ENCODE measurements at regions of chr7 and their contacts with region 1.

Region 1: GRCh38 chr7:25968205-25968993 is 183.6 kb upstream of the NFE2L3 start:
- DNase-seq: peak; percentile 58
- ATAC-seq: peak; percentile 74
- H3K4me3 Mint-ChIP-seq: peak overlapping the region; percentile 58
- H3K27ac Mint-ChIP-seq: peak overlapping the region; percentile 97
- H3K4me1 Mint-ChIP-seq: peaks cover 48% of the 10 kb centered on the region
- H3K27me3 Mint-ChIP-seq: peaks cover 4% of the 10 kb centered on the region
- CTCF ChIP-seq: no peak

Region 2: DNA sequence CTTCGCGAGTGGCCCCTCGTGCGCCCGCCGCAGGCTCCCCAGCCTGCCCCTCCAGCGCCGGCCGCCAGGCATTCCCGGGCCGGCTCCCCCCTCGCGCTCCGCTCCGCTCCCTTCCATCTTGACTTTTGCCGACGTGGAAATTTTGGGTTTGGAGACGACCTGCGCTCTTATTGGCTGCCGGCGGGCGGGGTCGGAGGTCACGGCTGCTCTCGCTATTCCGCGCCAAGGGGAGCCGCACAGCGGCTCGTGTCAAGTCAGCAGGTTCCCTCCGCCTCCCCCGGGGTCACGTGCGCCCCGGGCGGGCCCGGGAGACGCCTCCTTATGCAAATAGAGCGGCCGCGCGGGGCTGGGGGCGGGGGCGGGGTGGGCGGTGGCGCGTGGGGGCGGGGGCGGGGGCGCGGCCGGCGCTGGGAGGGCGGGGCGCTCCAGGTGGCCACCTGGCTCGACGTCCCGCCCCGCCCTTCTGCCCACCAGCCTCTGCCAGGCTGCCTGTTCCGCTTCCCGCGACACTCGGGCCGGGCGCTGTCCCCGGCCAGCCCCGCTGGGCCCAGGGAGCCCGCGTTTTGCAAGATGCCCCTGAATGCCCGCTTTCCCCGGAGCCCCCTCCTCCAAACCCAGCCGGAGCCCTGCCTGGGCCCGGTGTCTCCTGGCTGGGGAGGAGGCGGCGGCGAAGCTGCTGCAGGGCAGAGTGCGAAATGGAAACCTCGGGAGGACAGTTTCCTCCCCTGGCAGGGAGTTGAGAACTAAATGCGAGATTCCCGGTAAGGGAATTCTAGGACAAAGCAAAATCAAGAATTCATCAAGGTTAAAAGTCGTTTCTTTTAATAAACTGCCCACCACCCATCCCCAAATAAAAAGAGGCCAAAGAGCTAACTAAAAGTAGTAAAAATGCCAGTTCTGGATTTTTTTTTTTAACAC is 17.1 kb before region 1 on chr7:
- CTCF ChIA-PET with region 1: interaction called, 3 read pairs
- POLR2A ChIA-PET with region 1: interaction called, 28 read pairs
- intact Hi-C with region 1: loop called (anchors 1 kb)
- DNase-seq: peak; percentile 82
- ATAC-seq: peak; percentile 93
- H3K4me3 Mint-ChIP-seq: peak overlapping the region; percentile 92
- H3K27ac Mint-ChIP-seq: peak overlapping the region; percentile 81
- H3K4me1 Mint-ChIP-seq: peaks cover 35% of the 10 kb centered on the region
- H3K27me3 Mint-ChIP-seq: peaks cover 31% of the 10 kb centered on the region
- CTCF ChIP-seq: no peak

Region 3: DNA sequence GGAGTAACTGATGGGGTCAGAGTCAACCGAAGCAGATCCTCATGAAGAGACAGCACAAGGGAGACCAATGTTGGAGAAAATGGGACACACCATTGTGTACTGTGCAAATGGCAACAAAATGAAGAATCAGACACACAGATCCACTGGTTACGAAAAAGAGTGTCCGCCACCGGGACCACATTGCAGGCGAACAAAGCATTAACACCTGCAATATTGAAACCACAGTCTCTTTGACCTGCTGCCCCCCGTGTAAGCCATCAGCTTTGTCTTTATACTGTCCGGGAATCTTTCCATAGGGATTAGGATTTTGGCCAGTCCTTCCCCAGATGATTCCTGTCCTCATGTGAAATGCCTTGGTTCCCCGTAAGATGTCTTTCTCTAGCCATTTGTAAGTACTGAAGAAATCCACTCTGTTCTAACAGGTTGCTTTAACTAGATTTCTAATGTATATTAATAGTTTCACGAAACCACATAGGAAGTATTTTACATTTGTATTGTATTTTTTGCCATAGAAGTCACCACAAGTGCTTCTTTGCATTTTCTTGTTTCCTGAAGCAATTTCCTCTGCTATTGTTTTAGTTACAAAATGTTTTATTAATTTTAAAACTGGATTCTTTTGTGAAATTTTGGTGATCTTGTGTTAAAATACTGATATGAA is 42.8 kb after region 1 on chr7:
- CTCF ChIA-PET with region 1: no interaction called
- POLR2A ChIA-PET with region 1: no interaction called
- intact Hi-C with region 1: loop called (anchors 5 kb)
- DNase-seq: no peak
- ATAC-seq: no peak
- H3K4me3 Mint-ChIP-seq: no peak overlapping the region
- H3K27ac Mint-ChIP-seq: no peak overlapping the region
- H3K4me1 Mint-ChIP-seq: peaks cover 18% of the 10 kb centered on the region
- H3K27me3 Mint-ChIP-seq: peaks cover 59% of the 10 kb centered on the region
- CTCF ChIP-seq: no peak

Region 4: DNA sequence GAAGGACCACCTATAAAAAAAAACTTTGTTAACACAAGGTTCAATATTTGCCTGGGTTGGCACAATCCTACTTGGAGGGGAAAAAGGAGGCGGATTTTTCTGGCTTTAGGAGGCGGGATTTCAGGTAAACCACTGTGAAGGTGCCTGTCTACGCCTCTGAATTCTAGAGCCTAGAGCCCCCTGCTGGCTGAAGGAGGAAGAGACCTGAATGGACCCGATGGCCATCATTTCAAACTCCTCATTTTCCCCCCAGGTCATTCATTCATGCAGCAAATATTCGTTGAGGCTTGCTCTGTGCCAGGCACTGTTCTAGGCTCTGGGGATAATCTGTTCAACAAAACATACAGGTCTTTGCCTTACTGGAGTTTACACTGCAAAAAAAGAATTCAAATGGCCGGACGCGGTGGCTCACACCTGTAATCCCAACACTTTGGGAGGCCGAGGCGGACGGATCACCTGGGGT is 93.3 kb after region 1 on chr7:
- CTCF ChIA-PET with region 1: interaction called, 3 read pairs
- POLR2A ChIA-PET with region 1: no interaction called
- intact Hi-C with region 1: loop called (anchors 1 kb)
- DNase-seq: peak; percentile 51
- ATAC-seq: peak; percentile 82
- H3K4me3 Mint-ChIP-seq: no peak overlapping the region
- H3K27ac Mint-ChIP-seq: no peak overlapping the region
- H3K4me1 Mint-ChIP-seq: peaks cover 4% of the 10 kb centered on the region
- H3K27me3 Mint-ChIP-seq: peaks cover 42% of the 10 kb centered on the region
- CTCF ChIP-seq: no peak

Region 5: GRCh38 chr7:26101361-26102151 is 133.2 kb after region 1 on chr7:
- CTCF ChIA-PET with region 1: no interaction called
- POLR2A ChIA-PET with region 1: no interaction called
- intact Hi-C with region 1: loop called (anchors 1 kb)
- DNase-seq: peak; percentile 35
- ATAC-seq: peak; percentile 76
- H3K4me3 Mint-ChIP-seq: peak overlapping the region; percentile 92
- H3K27ac Mint-ChIP-seq: peak overlapping the region; percentile 95
- H3K4me1 Mint-ChIP-seq: peaks cover 49% of the 10 kb centered on the region
- H3K27me3 Mint-ChIP-seq: no peaks in the 10 kb centered on the region
- CTCF ChIP-seq: no peak

Region 6: DNA sequence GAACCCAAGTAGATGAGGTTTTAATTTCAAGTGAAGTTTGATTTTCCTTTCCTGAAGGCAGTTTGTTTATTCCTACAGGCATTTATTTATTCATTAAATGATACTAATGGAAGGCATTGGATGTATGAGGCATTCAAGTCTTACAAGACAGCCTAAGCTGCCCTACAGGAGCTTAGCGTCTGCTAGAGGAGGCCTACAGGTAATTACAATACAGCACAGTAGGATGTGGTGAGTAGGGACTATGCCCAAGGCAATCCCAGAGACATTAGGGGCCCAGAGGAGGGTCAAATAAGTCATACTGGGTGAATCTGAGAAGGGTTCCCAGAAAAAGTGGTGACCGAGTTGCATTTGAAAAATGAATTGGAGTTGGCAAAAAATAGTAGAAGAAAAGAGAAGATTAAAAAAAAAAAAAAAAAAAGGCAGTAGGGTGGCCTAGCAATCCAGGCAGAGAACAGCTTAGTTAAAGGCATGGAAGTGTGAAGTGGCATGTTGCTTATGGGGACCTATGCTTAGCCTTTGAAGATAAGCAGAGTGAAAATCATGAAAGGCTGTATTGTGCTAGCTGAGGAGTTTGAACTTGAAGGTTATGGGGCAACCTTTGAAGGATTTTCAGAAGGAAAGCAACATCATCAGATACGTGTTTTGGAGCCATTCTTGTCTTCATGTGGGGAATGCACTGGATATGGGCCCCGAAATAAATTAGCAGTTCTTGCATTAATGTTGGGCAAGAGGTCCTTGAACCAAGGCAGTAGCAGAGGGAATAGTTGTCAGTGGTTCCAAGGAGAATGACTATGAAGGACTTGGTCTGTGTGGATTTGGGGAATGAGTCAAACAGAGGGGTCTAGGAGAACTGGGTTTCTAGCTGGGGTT is 388.8 kb after region 1 on chr7:
- CTCF ChIA-PET with region 1: no interaction called
- POLR2A ChIA-PET with region 1: no interaction called
- intact Hi-C with region 1: loop called (anchors 1 kb)
- DNase-seq: no peak
- ATAC-seq: no peak
- H3K4me3 Mint-ChIP-seq: no peak overlapping the region
- H3K27ac Mint-ChIP-seq: peak overlapping the region; percentile 46
- H3K4me1 Mint-ChIP-seq: peaks cover 48% of the 10 kb centered on the region
- H3K27me3 Mint-ChIP-seq: no peaks in the 10 kb centered on the region
- CTCF ChIP-seq: no peak

Region 7: GRCh38 chr7:26398756-26399501 is 430.5 kb after region 1 on chr7:
- CTCF ChIA-PET with region 1: no interaction called
- POLR2A ChIA-PET with region 1: interaction called, 8 read pairs
- intact Hi-C with region 1: loop called (anchors 1 kb)
- DNase-seq: peak; percentile 83
- ATAC-seq: peak; percentile 89
- H3K4me3 Mint-ChIP-seq: peak overlapping the region; percentile 98
- H3K27ac Mint-ChIP-seq: peak overlapping the region; percentile 98
- H3K4me1 Mint-ChIP-seq: peaks cover 36% of the 10 kb centered on the region
- H3K27me3 Mint-ChIP-seq: no peaks in the 10 kb centered on the region
- CTCF ChIP-seq: no peak

Measured in activated B cell treated with CpG ODN at 0.5 μM for 24 hours (primary cell).